T-cell (primary cell): ENCODE measurements at regions of chr6 and their contacts with region 1.

Region 1: GRCh38 chr6:158072083-158072721 is 90.5 kb downstream of the SYNJ2 start:
- DNase-seq: peak; percentile 22 to 75 (median 55)
- ATAC-seq: peak; percentile 58 to 75 (median 65)
- H3K4me3 ChIP-seq: no peak overlapping the region
- H3K4me3 Mint-ChIP-seq: no peak overlapping the region
- H3K27ac ChIP-seq: no peak overlapping the region
- H3K27ac Mint-ChIP-seq: peak overlapping the region in 1 of 2 donors; percentile 51
- H3K4me1 ChIP-seq: peaks cover 0 to 11% of the 10 kb centered on the region in 2 experiments
- H3K4me1 Mint-ChIP-seq: peaks cover 5 to 20% (median 18%) of the 10 kb centered on the region in 3 donors
- H3K27me3 ChIP-seq: no peaks in the 10 kb centered on the region
- H3K27me3 Mint-ChIP-seq: no peaks in the 10 kb centered on the region

Region 2: DNA sequence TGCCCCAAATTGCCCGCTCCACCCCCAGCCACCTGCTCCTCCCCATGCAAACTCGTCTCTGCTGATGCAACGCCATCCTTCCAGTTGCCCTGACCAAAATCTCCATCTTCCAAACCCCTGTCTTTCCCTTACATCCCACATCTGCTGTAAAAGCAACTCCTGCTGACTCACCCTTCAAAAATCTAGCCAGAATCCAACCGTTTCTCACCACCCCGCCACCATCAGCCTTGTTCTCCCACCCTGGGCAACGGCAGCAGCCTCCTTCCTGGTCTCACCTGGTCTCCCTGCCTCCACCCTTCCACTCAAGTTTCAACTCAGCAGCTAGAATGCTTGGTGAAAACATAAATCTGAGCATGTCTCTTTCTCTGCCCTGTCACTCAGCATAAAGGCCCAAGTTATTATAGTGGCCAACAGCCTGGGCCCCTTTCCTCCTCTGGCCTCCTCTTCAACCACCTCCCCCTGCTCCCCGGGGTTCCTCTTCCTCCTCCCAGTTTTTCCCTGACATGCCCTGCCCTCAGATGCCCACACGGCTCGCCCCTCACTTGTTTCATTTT is 97.8 kb before region 1 on chr6:
- CTCF ChIA-PET with region 1: no interaction called
- POLR2A ChIA-PET with region 1: no interaction called
- DNase-seq: no peak
- ATAC-seq: no peak
- H3K4me3 ChIP-seq: no peak overlapping the region
- H3K4me3 Mint-ChIP-seq: no peak overlapping the region
- H3K27ac ChIP-seq: no peak overlapping the region
- H3K27ac Mint-ChIP-seq: no peak overlapping the region
- H3K4me1 ChIP-seq: peaks cover 2% of the 10 kb centered on the region in 2 experiments
- H3K4me1 Mint-ChIP-seq: no peaks in the 10 kb centered on the region
- H3K27me3 ChIP-seq: no peaks in the 10 kb centered on the region
- H3K27me3 Mint-ChIP-seq: no peaks in the 10 kb centered on the region

Region 3: GRCh38 chr6:158060455-158061360 is 11.5 kb before region 1 on chr6:
- CTCF ChIA-PET with region 1: interaction called, 5 to 13 read pairs
- POLR2A ChIA-PET with region 1: interaction called in 1 of 2 experiments, 9 read pairs
- DNase-seq: peak in 1 of 35 experiments; percentile 31
- ATAC-seq: peak in 3 of 4 experiments; percentile 32 to 52 (median 36)
- H3K4me3 ChIP-seq: no peak overlapping the region
- H3K4me3 Mint-ChIP-seq: no peak overlapping the region
- H3K27ac ChIP-seq: no peak overlapping the region
- H3K27ac Mint-ChIP-seq: peak overlapping the region; percentile 74 to 89
- H3K4me1 ChIP-seq: peaks cover 24 to 35% of the 10 kb centered on the region in 2 experiments
- H3K4me1 Mint-ChIP-seq: peaks cover 28 to 33% (median 30%) of the 10 kb centered on the region in 3 donors
- H3K27me3 ChIP-seq: no peaks in the 10 kb centered on the region
- H3K27me3 Mint-ChIP-seq: no peaks in the 10 kb centered on the region

Region 4: DNA sequence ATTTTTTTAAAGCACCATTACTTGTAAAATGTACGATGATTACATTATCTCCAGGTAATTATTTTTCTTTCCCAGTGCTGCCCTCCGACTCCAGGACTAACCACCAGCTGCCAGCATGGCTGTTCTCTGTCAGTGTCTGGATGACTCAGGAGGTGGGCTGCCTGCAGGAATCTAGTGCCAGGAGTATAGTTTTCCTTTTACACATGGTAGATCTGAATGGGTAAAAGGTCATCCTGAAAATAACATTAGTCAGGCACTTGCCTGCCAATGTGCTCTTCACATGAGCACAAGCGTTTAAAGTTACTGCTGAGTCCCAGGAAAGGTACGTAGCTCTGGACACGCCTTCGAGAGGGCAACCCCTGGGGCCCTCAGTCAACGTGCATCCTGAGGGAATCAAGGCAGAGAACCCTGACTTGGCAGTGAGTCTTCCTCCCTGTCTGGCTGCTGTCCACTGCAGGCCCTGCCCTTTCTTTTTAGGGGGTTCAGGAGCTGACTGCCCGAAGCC is 569.9 kb after region 1 on chr6:
- CTCF ChIA-PET with region 1: no interaction called
- POLR2A ChIA-PET with region 1: no interaction called
- DNase-seq: no peak
- ATAC-seq: no peak
- H3K4me3 ChIP-seq: peak overlapping the region in 1 of 2 donors; percentile 81
- H3K4me3 Mint-ChIP-seq: peak overlapping the region; percentile 91 to 99 (median 95)
- H3K27ac ChIP-seq: no peak overlapping the region
- H3K27ac Mint-ChIP-seq: peak overlapping the region; percentile 69 to 97
- H3K4me1 ChIP-seq: peaks cover 12 to 57% of the 10 kb centered on the region in 2 experiments
- H3K4me1 Mint-ChIP-seq: peaks cover 66 to 76% (median 71%) of the 10 kb centered on the region in 3 donors
- H3K27me3 ChIP-seq: no peaks in the 10 kb centered on the region
- H3K27me3 Mint-ChIP-seq: no peaks in the 10 kb centered on the region